ENCODE measurements at regions of chr7 and their contacts with region 1.

Region 1: GRCh38 chr7:36765605-36766004 is 41.3 kb upstream of the AOAH start:
- DNase-seq: no peak
- H3K4me3 Mint-ChIP-seq: no peak overlapping the region
- H3K27ac Mint-ChIP-seq: no peak overlapping the region
- H3K4me1 Mint-ChIP-seq: peaks cover 40% of the 10 kb centered on the region
- H3K27me3 Mint-ChIP-seq: peaks cover 2% of the 10 kb centered on the region

Region 2: DNA sequence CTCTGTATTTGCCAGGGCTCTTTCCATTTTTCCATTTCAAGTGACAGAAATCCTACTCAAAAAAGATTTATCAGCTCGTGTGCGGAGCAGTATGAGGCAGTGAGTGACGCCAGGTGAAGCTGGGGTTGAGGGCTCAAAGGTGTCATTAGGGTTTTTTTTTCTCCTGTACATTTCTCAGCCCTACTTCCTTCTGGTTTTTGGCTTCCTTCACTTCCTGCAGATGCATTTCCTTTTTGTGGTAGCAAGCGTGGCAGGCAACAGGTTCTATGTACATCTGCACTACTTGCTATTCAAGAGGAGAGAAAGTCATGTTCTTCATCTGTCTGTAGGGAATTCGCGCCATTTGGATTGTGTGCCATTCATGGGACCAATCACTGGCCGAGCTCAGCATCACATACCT is 11.5 kb after region 1 on chr7:
- CTCF ChIA-PET with region 1: interaction called, 31 read pairs
- POLR2A ChIA-PET with region 1: no interaction called
- DNase-seq: peak; percentile 65
- H3K4me3 Mint-ChIP-seq: peak overlapping the region; percentile 53
- H3K27ac Mint-ChIP-seq: peak overlapping the region; percentile 85
- H3K4me1 Mint-ChIP-seq: peaks cover 78% of the 10 kb centered on the region
- H3K27me3 Mint-ChIP-seq: no peaks in the 10 kb centered on the region

Measured in activated CD4-positive, alpha-beta T cell treated with anti-CD3 and anti-CD28 coated beads, Interleukin-2, amount 10 ng/mL, durations not matched to agents 7 days and 5 days (primary cell).